ENCODE measurements at regions of chr22 and their contacts with region 1.

Region 1: DNA sequence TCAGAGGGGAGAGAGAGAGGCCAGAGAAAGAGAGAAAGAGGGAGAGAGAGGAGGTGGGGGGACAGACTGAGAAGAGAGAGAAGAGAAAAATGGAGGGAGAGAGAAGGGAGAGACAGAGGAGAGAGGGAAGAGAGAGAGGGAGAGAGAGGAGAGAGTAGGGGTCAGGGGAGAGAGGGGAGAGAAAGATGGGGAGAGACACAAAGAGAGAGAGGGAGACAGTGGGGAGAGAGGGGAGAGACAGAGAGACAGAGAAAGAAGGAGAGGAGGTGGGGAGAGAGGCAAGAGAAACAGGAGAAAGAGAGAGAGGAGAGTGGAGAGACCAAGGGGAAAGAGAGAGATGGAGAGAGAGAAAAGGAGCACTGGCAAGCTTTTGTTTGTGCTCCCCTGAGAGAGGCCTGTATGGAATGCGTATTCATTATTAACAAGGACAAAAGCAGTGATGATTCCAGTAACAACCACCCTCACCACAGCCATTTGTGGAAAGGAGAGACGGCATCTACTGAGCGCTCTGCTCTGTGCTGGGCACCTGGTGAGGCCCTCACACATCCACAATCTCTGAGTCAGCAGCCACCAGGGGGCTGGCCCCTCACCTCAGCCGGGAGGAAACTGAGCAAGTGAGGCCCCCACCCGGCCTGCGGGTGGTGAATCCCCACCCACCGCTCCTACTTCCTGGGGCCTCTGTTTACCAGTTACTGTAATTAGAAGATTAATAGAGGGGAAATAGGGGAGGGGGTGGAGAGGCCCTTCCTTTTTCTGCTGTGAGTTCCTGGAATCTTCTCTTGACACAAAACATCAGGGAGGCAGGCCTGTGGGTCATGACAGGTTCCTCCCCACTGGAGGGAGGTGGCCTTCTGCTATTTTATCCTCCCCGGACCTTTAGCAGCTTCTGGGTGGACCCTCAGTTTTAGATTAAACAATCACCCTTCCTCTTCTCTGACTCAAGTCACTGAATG is 14.6 kb upstream of the MIAT start:
- DNase-seq: peak; percentile 41 to 77 (median 50)
- ATAC-seq: peak; percentile 73 to 78
- H3K4me3 Mint-ChIP-seq: peak overlapping the region; percentile 50 to 85 (median 66)
- H3K27ac Mint-ChIP-seq: peak overlapping the region; percentile 90 to 97 (median 92)
- H3K4me1 Mint-ChIP-seq: peaks cover 35 to 74% (median 71%) of the 10 kb centered on the region in 4 donors
- H3K27me3 Mint-ChIP-seq: peaks cover 0 to 1% (median 0%) of the 10 kb centered on the region in 5 donors

Region 2: GRCh38 chr22:26579331-26579886 is 63.3 kb before region 1 on chr22:
- POLR2A ChIA-PET with region 1: interaction called, 10 read pairs
- DNase-seq: peak; percentile 38 to 75 (median 56)
- ATAC-seq: peak; percentile 94 to 96
- H3K4me3 Mint-ChIP-seq: peak overlapping the region; percentile 76 to 88 (median 81)
- H3K27ac Mint-ChIP-seq: peak overlapping the region; percentile 87 to 97 (median 92)
- H3K4me1 Mint-ChIP-seq: peaks cover 51 to 89% (median 81%) of the 10 kb centered on the region in 4 donors
- H3K27me3 Mint-ChIP-seq: no peaks in the 10 kb centered on the region

Region 3: DNA sequence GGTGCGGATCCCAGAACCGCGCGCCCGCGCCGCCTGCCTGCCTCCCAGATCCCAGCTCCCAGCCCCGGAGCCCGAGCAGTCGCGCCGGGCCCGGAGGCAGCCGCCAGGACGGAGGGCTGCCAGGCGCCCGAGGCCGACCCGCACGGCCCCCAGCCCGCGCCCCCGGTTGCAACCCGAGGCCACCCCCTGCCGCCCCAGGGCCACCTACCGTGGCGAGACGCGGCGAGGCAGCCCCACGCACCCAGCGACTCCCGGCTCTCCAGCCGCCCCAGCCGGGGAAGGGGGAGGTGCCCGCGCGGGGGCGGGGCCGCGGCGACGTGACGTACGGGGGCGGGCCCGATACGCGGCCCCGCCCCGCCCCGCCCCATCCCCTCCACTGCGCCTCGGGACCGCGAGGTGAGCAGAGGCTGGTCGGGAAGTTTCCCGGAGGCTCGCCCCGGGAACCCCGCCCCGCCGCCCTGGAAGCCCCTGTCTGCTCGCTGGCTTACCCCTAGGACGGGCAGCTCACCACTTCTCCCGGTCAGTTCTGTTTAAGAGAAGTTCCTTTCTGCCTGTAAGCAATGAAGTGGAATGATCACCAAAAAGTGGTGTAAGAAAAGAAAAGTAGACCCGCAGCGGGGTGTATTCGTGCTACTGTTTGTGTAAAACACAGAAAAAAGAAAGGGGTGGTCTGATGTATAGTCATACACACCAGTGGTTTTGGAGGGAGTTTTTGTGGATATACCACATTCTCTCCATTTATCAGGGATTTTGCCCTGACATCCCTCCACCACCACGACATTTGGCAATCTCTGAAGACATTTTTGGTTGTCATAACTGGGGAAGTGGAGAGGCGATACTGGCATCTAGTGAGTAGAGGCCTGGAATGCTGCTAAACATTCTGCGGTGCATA is 52.6 kb before region 1 on chr22 and contains the start of gene TPST2:
- POLR2A ChIA-PET with region 1: interaction called, 16 read pairs
- DNase-seq: peak; percentile 68 to 87 (median 80)
- ATAC-seq: peak; percentile 69 to 78
- H3K4me3 Mint-ChIP-seq: peak within 1 kb of the TSS; percentile 89 to 97 (median 94)
- H3K27ac Mint-ChIP-seq: peak within 1 kb of the TSS; percentile 90 to 98 (median 96)
- H3K4me1 Mint-ChIP-seq: peaks cover 43 to 86% (median 77%) of the 10 kb centered on the region in 4 donors
- H3K27me3 Mint-ChIP-seq: no peaks in the 10 kb centered on the region
- polyA plus RNA-seq, gene TPST2: 87.9 to 134 (median 126) TPM

Region 4: DNA sequence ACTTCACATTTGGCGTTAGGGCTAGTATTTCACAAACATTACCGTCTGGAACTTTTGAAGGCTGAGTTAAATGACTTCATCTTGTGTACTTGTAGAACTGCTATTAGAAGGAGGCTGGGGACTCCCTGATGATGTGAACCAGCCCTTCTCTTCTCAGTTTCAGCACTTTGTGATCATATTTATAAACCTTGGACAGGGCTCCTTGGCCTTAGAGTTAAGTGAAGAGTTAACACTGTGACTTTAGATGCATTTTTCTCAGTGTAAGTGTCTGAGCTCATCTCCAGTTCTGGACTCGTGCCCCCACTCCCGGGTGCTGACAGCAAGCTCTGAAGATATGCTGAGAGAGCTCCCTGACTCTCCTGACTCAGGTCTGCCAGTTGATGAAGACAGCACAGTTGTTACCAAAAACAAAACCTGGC is 23.1 kb after region 1 on chr22:
- POLR2A ChIA-PET with region 1: no interaction called
- DNase-seq: no peak
- ATAC-seq: peak in 1 of 2 donors; percentile 11
- H3K4me3 Mint-ChIP-seq: peak overlapping the region in 2 of 10 donors; percentile 67 to 78
- H3K27ac Mint-ChIP-seq: peak overlapping the region in 8 of 10 donors; percentile 13 to 94 (median 92)
- H3K4me1 Mint-ChIP-seq: peaks cover 11 to 56% (median 50%) of the 10 kb centered on the region in 4 donors
- H3K27me3 Mint-ChIP-seq: no peaks in the 10 kb centered on the region